Activated CD8-positive, alpha-beta T cell treated with anti-CD3 and anti-CD28 coated beads for 36 hours (primary cell): ENCODE measurements at regions of chr12 and their contacts with region 1.

Region 1: GRCh38 chr12:15532364-15532977 is 210.2 kb downstream of the PTPRO start:
- DNase-seq: peak; percentile 61
- ATAC-seq: peak; percentile 77
- H3K4me3 Mint-ChIP-seq: no peak overlapping the region
- H3K27ac Mint-ChIP-seq: no peak overlapping the region
- H3K4me1 Mint-ChIP-seq: peaks cover 8% of the 10 kb centered on the region
- H3K27me3 Mint-ChIP-seq: no peaks in the 10 kb centered on the region
- CTCF ChIP-seq: peak; percentile 86

Region 2: GRCh38 chr12:15563663-15564062 is 31.2 kb after region 1 on chr12:
- CTCF ChIA-PET with region 1: interaction called, 46 read pairs
- POLR2A ChIA-PET with region 1: interaction called, 3 read pairs
- intact Hi-C with region 1: no loop called
- DNase-seq: peak; percentile 54
- ATAC-seq: peak; percentile 83
- H3K4me3 Mint-ChIP-seq: peak overlapping the region; percentile 54
- H3K27ac Mint-ChIP-seq: peak overlapping the region; percentile 90
- H3K4me1 Mint-ChIP-seq: peaks cover 47% of the 10 kb centered on the region
- H3K27me3 Mint-ChIP-seq: no peaks in the 10 kb centered on the region
- CTCF ChIP-seq: no peak

Region 3: DNA sequence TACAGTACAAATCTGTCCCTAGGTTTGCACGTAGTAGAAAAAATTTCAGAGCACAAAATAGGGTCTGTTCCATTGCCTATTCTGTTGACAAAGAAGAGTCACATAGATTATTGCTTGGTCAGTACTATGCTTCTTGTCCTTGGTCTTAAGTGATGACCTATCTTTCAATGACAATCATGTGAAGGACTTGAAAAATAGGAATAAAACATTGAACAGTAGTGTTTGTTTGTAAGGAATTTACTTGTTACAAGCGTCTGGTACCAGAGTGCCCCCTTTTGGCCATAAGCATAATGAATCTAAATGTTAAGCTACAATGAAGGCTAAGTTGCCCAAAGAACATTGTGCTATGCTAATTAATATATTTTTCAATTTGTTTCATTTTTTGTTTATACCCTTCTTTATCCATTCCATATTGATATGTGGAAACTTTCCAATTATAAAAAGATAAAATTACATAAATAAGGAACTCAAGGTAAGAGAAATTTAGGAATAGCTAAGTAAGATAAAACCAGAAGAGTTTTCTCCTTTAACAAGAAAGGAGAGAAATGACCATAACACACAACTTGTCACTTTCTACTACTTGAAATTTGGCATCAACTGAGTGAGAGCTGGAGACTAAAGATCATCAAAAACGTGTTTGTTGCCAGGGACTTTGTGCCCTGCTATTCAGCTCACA is 52.0 kb after region 1 on chr12:
- CTCF ChIA-PET with region 1: interaction called, 510 read pairs
- POLR2A ChIA-PET with region 1: interaction called, 4 read pairs
- intact Hi-C with region 1: loop called (anchors 1 kb)
- DNase-seq: peak; percentile 50
- ATAC-seq: peak; percentile 58
- H3K4me3 Mint-ChIP-seq: no peak overlapping the region
- H3K27ac Mint-ChIP-seq: no peak overlapping the region
- H3K4me1 Mint-ChIP-seq: peaks cover 12% of the 10 kb centered on the region
- H3K27me3 Mint-ChIP-seq: no peaks in the 10 kb centered on the region
- CTCF ChIP-seq: peak; percentile 88

Region 4: DNA sequence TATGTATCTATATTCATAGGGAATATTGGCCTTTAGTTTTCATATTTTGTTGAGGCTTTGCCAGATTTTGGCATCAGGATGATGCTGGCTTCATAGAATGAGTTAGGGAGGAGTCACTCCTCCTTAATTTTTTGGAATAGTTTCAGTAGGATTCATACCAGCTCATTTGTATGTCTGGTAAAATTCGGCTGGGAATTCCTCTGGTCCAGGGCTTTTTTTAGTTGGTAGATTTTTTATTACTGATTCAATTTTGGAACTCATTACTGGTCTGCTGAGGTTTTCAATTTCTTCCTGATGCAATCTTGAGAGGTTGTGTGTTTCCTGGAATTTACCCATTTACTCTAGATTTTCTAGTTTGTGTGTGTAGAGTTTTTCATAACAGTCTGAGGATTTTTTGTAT is 81.5 kb after region 1 on chr12:
- CTCF ChIA-PET with region 1: no interaction called
- POLR2A ChIA-PET with region 1: no interaction called
- intact Hi-C with region 1: no loop called
- DNase-seq: no peak
- ATAC-seq: no peak
- H3K4me3 Mint-ChIP-seq: no peak overlapping the region
- H3K27ac Mint-ChIP-seq: no peak overlapping the region
- H3K4me1 Mint-ChIP-seq: no peaks in the 10 kb centered on the region
- H3K27me3 Mint-ChIP-seq: peaks cover 4% of the 10 kb centered on the region
- CTCF ChIP-seq: no peak

Region 5: GRCh38 chr12:15698377-15698871 is 166.0 kb after region 1 on chr12:
- CTCF ChIA-PET with region 1: no interaction called
- POLR2A ChIA-PET with region 1: no interaction called
- intact Hi-C with region 1: loop called (anchors 10 kb)
- DNase-seq: no peak
- ATAC-seq: no peak
- H3K4me3 Mint-ChIP-seq: no peak overlapping the region
- H3K27ac Mint-ChIP-seq: no peak overlapping the region
- H3K4me1 Mint-ChIP-seq: peaks cover 25% of the 10 kb centered on the region
- H3K27me3 Mint-ChIP-seq: peaks cover 4% of the 10 kb centered on the region
- CTCF ChIP-seq: no peak